ENCODE measurements at regions of chr11 and their contacts with region 1.

Region 1: GRCh38 chr11:65796726-65797601 is 10.1 kb downstream of the OVOL1 start:
- DNase-seq: no peak
- H3K4me3 ChIP-seq: no peak overlapping the region
- H3K27ac ChIP-seq: no peak overlapping the region
- H3K4me1 ChIP-seq: peaks cover 0 to 21% (median 5%) of the 10 kb centered on the region in 4 experiments; a peak in 5 of 7 replicates
- H3K27me3 ChIP-seq: no peaks in the 10 kb centered on the region
- CTCF ChIP-seq: no peak
- EP300 ChIP-seq: no peak
- POLR2A ChIP-seq: no peak
- RAD21 ChIP-seq: 0 out of 4 replicates have a peak, but pooled peaks of 1 of the 2 experiments have one; percentile 6

Region 2: DNA sequence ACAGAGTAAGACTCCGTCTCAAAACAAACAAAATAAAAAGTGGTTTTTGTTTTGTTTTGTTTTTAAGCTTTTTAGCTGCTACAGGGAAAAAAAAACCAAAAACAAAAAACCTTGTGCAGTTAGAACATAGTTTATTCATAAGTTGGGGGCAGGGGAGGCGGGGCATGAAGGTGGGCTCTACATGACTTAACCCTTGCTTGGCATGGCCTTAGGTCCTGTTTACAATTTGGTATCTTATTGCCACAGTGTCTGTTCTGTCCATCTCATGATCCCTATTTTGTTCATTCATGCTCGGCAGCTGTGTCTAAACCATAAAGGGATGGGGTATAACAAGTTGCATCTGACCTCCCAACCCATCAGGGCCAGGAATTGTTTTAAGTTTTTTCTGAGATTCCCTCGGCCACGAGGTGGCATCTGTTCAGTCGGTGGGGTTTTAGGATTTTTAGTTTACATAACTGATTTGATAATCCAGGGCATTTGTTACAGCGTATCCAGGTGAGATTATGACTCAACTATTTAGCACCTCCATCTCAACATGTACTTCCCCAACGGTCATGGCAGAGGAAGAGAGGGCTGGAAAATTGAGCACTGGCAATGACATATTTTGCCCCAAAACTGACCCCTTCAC is 23.1 kb before region 1 on chr11:
- CTCF ChIA-PET with region 1: interaction called, 128 read pairs
- POLR2A ChIA-PET with region 1: interaction called, 3 read pairs
- DNase-seq: no peak
- H3K4me3 ChIP-seq: no peak overlapping the region
- H3K27ac ChIP-seq: no peak overlapping the region
- H3K4me1 ChIP-seq: no peaks in the 10 kb centered on the region
- H3K27me3 ChIP-seq: no peaks in the 10 kb centered on the region
- CTCF ChIP-seq: no peak; a peak in 1 of 4 replicates
- EP300 ChIP-seq: no peak
- POLR2A ChIP-seq: no peak
- RAD21 ChIP-seq: 0 out of 4 replicates have a peak, but pooled peaks of 1 of the 2 experiments have one; percentile 5